ENCODE measurements at regions of chr22 and their contacts with region 1.

Region 1: GRCh38 chr22:37608477-37609239 is at the start of gene GGA1:
- DNase-seq: peak; percentile 92 to 99 (median 97)
- ATAC-seq: peak; percentile 89
- H3K4me3 ChIP-seq: peak within 1 kb of the TSS; percentile 81
- H3K4me3 Mint-ChIP-seq: peak within 1 kb of the TSS; percentile 88 to 97 (median 93)
- H3K27ac ChIP-seq: peak within 1 kb of the TSS; percentile 85
- H3K27ac Mint-ChIP-seq: peak within 1 kb of the TSS; percentile 93 to 99 (median 97)
- H3K4me1 ChIP-seq: peaks cover 46 to 47% of the 10 kb centered on the region in 2 donors
- H3K4me1 Mint-ChIP-seq: peaks cover 36 to 72% (median 57%) of the 10 kb centered on the region in 7 donors
- H3K27me3 ChIP-seq: no peaks in the 10 kb centered on the region
- H3K27me3 Mint-ChIP-seq: peaks cover 0 to 6% (median 0%) of the 10 kb centered on the region in 5 donors
- total RNA-seq, gene GGA1: 64.2 to 124 (median 102) TPM

Region 2: DNA sequence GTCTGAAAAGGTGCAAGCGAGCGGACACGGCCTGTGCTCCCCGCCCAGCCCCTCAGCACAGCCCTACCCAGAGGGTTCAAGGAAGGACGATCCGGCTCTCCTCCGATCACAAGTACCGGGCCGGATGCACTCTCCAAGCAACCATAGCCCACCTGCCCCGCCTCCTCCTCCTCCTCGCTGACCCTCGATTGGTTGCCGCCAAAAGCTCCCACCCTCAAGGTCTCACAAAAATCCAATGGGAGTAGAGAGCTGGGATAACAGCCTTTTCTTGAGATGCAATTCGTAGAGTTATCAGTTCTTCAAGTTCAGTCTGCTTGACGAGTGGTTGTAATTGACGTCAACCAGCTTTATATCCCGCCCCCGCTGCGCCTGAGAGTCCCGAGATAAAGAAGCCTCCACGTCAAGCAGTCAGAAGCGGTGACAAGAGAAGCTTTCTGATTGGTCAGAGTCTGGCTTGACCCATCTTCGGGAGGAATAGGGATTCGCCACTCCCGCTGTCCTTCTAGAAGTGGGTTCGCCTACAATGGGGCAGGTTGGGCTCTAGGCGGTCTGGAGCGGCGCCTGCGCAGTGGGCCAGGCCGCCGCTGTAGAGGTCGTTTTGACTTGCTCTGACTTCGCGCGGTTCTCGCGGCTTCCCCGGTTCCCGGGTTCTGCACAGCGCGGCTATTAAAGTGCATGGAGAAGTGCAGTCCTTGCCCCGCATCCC is 832.5 kb before region 1 on chr22 and contains the start of gene IFT27:
- CTCF ChIA-PET with region 1: interaction called, 3 read pairs
- POLR2A ChIA-PET with region 1: no interaction called
- intact Hi-C with region 1: loop called in 1 of 2 experiments (anchors 1 kb)
- DNase-seq: peak; percentile 72 to 99 (median 98)
- ATAC-seq: peak; percentile 92
- H3K4me3 ChIP-seq: peak within 1 kb of the TSS; percentile 65
- H3K4me3 Mint-ChIP-seq: peak within 1 kb of the TSS; percentile 85 to 97 (median 92)
- H3K27ac ChIP-seq: peak within 1 kb of the TSS; percentile 90
- H3K27ac Mint-ChIP-seq: peak within 1 kb of the TSS; percentile 92 to 99 (median 96)
- H3K4me1 ChIP-seq: peaks cover 13 to 15% of the 10 kb centered on the region in 2 donors
- H3K4me1 Mint-ChIP-seq: peaks cover 18 to 44% (median 31%) of the 10 kb centered on the region in 7 donors
- H3K27me3 ChIP-seq: no peaks in the 10 kb centered on the region
- H3K27me3 Mint-ChIP-seq: no peaks in the 10 kb centered on the region
- total RNA-seq, gene IFT27: 16.6 to 40.9 (median 32.0) TPM

Region 3: DNA sequence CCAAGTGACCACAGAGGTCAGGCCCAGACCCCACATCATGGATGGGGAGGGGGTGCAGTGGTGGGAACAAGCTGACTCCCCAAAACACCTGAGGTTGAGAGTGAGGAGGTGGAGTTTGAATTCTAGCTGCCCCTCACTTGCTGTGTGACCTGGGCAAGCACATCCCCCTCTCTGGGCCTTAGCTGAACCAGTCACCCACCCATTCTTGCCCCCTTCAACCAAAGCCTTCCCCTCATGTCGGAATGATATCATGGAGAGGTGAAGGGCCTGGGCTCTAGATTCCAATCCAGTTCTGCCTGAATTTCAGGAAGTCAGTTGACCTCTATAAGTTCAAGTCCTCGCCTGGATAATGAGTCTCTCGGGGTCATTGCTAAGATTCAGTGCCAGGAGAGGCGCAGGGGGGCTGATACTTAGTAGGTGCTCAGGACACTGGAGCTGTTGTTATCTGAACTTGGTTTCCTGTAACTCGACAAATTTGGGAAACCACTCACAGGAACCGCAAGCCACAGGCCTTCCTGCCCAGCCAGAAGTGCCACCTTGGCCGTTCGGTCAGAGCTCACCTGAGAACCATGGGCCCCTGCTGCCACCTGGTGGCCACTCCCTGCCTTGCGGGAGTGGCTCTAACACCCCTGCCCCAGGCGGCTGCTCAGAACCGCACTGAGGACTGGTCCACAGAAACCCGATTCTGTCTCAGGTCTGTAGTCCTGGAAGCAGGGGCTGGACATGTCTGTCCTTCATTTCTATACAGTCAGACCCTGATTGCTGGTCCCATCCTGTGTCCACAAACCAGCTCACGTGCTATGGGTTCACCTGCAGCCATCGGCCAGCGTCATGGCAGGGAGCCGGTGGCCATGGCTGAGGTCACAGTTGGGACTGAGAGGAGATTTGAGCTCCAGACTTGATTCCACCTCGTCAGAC is 41.5 kb before region 1 on chr22:
- CTCF ChIA-PET with region 1: interaction called, 5 read pairs
- POLR2A ChIA-PET with region 1: interaction called, 5 read pairs
- intact Hi-C with region 1: loop called in 1 of 2 experiments (anchors 1 kb)
- DNase-seq: peak; percentile 70 to 93 (median 82)
- ATAC-seq: peak; percentile 94
- H3K4me3 ChIP-seq: peak overlapping the region; percentile 28
- H3K4me3 Mint-ChIP-seq: peak overlapping the region; percentile 61 to 85 (median 72)
- H3K27ac ChIP-seq: no peak overlapping the region
- H3K27ac Mint-ChIP-seq: peak overlapping the region in 3 of 9 donors; percentile 26 to 70 (median 62)
- H3K4me1 ChIP-seq: peaks cover 20 to 22% of the 10 kb centered on the region in 2 donors
- H3K4me1 Mint-ChIP-seq: peaks cover 16 to 35% (median 25%) of the 10 kb centered on the region in 7 donors
- H3K27me3 ChIP-seq: peaks cover under 1 to 4% of the 10 kb centered on the region in 2 donors
- H3K27me3 Mint-ChIP-seq: peaks cover 4 to 44% (median 12%) of the 10 kb centered on the region in 5 donors

Region 4: DNA sequence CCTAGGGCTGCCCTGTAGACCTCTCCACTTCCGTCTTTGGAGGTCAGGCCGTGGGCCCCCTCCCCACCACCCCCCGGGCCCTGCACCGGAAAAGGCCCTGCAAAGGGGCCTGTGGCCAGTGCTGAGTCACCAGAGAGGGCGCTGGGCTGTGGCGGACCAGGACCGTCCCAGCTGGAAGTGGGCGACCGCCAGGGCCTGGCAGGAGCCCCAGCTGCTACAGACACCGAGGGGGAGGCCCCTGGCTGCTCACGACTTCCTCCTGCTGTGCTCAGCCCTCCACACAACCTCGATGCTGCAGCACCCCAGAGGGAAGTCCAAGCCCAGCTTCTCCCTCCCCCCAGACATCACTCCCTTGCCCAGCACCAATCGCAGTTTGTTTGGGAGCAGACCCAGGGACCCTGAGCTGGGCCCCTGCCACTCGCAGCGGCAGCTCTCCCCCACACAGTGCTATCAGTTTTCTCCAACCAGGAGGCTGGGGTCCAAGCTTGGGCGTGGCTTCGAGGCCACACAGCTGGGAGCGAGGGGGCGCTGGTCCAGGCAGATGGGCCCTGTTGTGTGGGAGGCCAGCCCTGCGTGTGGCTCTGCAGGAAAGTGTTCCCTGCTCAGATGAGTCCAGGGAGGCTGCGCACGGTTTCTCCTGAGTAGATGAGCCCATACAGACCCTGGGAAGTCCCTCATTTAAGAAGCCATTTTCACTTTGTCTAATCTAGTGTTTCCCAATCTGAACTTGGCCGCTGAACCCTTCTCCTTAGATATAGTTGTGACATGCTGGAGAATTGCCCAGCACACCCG is 25.2 kb after region 1 on chr22:
- CTCF ChIA-PET with region 1: interaction called, 12 read pairs
- POLR2A ChIA-PET with region 1: interaction called, 74 read pairs
- intact Hi-C with region 1: loop called (anchors 1 kb)
- DNase-seq: peak in 5 of 9 donors; percentile 25 to 68 (median 37)
- ATAC-seq: peak; percentile 81
- H3K4me3 ChIP-seq: peak overlapping the region; percentile 53
- H3K4me3 Mint-ChIP-seq: peak overlapping the region; percentile 18 to 80 (median 70)
- H3K27ac ChIP-seq: peak overlapping the region; percentile 71
- H3K27ac Mint-ChIP-seq: peak overlapping the region; percentile 86 to 98 (median 93)
- H3K4me1 ChIP-seq: peaks cover 55 to 72% of the 10 kb centered on the region in 2 donors
- H3K4me1 Mint-ChIP-seq: peaks cover 23 to 70% (median 64%) of the 10 kb centered on the region in 7 donors
- H3K27me3 ChIP-seq: no peaks in the 10 kb centered on the region
- H3K27me3 Mint-ChIP-seq: no peaks in the 10 kb centered on the region

Region 5: GRCh38 chr22:37676736-37677492 is 68.3 kb after region 1 on chr22:
- CTCF ChIA-PET with region 1: interaction called, 7 read pairs
- POLR2A ChIA-PET with region 1: interaction called, 12 read pairs
- intact Hi-C with region 1: loop called (anchors 1 kb)
- DNase-seq: peak; percentile 82 to 95 (median 94)
- ATAC-seq: peak; percentile 93
- H3K4me3 ChIP-seq: peak overlapping the region; percentile 60
- H3K4me3 Mint-ChIP-seq: peak overlapping the region; percentile 82 to 99 (median 91)
- H3K27ac ChIP-seq: peak overlapping the region; percentile 99
- H3K27ac Mint-ChIP-seq: peak overlapping the region; percentile 94 to 100 (median 100)
- H3K4me1 ChIP-seq: peaks cover 29 to 37% of the 10 kb centered on the region in 2 donors
- H3K4me1 Mint-ChIP-seq: peaks cover 14 to 68% (median 60%) of the 10 kb centered on the region in 7 donors
- H3K27me3 ChIP-seq: no peaks in the 10 kb centered on the region
- H3K27me3 Mint-ChIP-seq: no peaks in the 10 kb centered on the region

Region 6: GRCh38 chr22:37807410-37808293 is 199.0 kb after region 1 on chr22 and contains the start of gene GCAT:
- CTCF ChIA-PET with region 1: no interaction called
- POLR2A ChIA-PET with region 1: no interaction called
- intact Hi-C with region 1: loop called (anchors 1 to 2 kb)
- DNase-seq: peak; percentile 61 to 92 (median 71)
- ATAC-seq: peak; percentile 94
- H3K4me3 ChIP-seq: peak within 1 kb of the TSS; percentile 58
- H3K4me3 Mint-ChIP-seq: peak within 1 kb of the TSS; percentile 67 to 90 (median 80)
- H3K27ac ChIP-seq: peak within 1 kb of the TSS; percentile 44
- H3K27ac Mint-ChIP-seq: peak within 1 kb of the TSS in 6 of 9 donors; percentile 8 to 65 (median 44)
- H3K4me1 ChIP-seq: peaks cover 14 to 30% of the 10 kb centered on the region in 2 donors
- H3K4me1 Mint-ChIP-seq: peaks cover 15 to 51% (median 43%) of the 10 kb centered on the region in 7 donors
- H3K27me3 ChIP-seq: peaks cover 0 to 25% of the 10 kb centered on the region in 2 donors
- H3K27me3 Mint-ChIP-seq: peaks cover 4 to 38% (median 23%) of the 10 kb centered on the region in 5 donors
- total RNA-seq, gene GCAT: 1.1 to 14.6 (median 5.4) TPM

Region 7: DNA sequence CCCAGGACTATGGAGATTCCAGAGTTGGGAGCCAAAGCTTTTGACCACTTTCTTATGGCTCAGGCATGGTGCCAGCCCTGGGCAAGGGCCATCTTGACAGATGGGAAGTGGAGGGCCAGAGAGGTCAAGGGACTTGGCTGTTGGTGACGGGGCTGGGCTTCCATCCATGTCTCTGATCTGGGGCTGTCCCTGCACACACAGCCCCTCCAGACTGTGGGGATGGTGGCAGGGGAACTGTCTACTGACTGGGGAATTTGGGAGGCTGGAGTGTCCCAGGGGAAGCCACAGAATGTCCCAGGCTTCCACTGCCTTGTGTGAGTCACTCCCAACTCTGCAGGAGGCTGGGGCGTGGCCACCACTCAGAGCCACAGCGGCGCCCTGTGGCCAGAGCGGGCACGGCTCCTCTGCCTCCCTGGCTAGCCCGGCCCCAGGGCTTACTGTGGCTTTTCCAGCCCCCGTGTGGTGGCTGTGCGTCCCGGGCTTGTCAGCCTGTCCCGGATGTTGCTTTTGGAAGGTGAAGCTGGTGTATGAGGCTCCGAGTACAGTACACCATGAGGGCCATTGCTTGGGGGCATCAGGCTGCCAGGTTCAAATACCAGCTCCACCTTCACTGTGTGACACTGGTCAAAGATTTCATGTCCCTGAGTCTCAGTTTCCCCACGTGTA is 325.2 kb after region 1 on chr22:
- CTCF ChIA-PET with region 1: no interaction called
- POLR2A ChIA-PET with region 1: no interaction called
- intact Hi-C with region 1: loop called in 1 of 2 experiments (anchors 10 kb)
- DNase-seq: peak; percentile 50 to 89 (median 71)
- ATAC-seq: peak; percentile 100
- H3K4me3 ChIP-seq: no peak overlapping the region
- H3K4me3 Mint-ChIP-seq: no peak overlapping the region
- H3K27ac ChIP-seq: no peak overlapping the region
- H3K27ac Mint-ChIP-seq: peak overlapping the region in 1 of 9 donors; percentile 7
- H3K4me1 ChIP-seq: peaks cover 0 to 4% of the 10 kb centered on the region in 2 donors
- H3K4me1 Mint-ChIP-seq: peaks cover 0 to 15% (median 8%) of the 10 kb centered on the region in 7 donors
- H3K27me3 ChIP-seq: no peaks in the 10 kb centered on the region
- H3K27me3 Mint-ChIP-seq: no peaks in the 10 kb centered on the region